Naive thymus-derived CD8-positive, alpha-beta T cell (primary cell): ENCODE measurements at regions of chr17 and their contacts with region 1.

Region 1: GRCh38 chr17:28335201-28335955 is at the starts of genes IFT20 and TNFAIP1:
- DNase-seq: peak; percentile 89 to 99 (median 98)
- ATAC-seq: peak; percentile 94
- H3K4me3 Mint-ChIP-seq: peak within 1 kb of the TSS; percentile 93 to 99 (median 98)
- H3K27ac Mint-ChIP-seq: peak within 1 kb of the TSS; percentile 83 to 99 (median 97)
- H3K4me1 Mint-ChIP-seq: peaks cover 29 to 64% (median 56%) of the 10 kb centered on the region in 4 donors
- H3K27me3 Mint-ChIP-seq: no peaks in the 10 kb centered on the region
- polyA plus RNA-seq, gene IFT20: 44.1 to 56.6 (median 54.0) TPM
- polyA plus RNA-seq, gene TNFAIP1: 5.6 to 9.4 (median 7.1) TPM

Region 2: DNA sequence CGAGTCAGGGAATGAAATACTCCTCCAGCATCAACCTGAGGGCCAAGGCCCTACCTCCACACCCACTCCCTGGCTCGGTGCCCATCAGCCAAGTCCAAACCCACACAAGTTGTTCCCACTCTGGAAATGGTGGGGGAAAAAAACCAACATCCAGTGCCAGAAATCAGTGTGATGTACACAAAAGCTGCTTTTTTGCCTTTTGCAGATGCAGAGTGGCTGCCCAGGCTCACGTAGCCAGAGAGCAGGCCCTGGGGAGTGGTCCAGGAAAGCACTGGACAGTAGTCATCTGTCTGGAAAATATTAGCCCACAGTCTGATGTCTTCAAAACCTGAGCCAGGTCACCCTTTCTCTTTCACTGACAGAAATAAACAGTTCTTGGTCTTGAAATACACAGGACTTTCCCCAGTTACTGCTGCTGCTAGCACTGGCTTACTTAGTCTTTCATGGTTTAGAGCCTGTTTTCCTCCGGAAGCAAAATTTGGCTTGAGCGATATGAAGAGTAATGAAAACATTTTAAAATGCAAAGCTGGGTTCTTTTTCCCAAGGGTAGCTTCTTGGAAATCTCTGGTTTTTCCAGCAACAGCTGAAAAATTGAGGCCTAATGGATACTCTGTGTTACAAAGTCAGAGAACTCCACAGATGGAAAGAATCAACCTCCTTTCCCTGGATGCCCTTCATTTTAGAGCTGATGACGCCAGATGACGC is 516.8 kb before region 1 on chr17:
- POLR2A ChIA-PET with region 1: interaction called, 10 read pairs
- DNase-seq: no peak
- ATAC-seq: no peak
- H3K4me3 Mint-ChIP-seq: no peak overlapping the region
- H3K27ac Mint-ChIP-seq: no peak overlapping the region
- H3K4me1 Mint-ChIP-seq: no peaks in the 10 kb centered on the region
- H3K27me3 Mint-ChIP-seq: no peaks in the 10 kb centered on the region

Region 3: DNA sequence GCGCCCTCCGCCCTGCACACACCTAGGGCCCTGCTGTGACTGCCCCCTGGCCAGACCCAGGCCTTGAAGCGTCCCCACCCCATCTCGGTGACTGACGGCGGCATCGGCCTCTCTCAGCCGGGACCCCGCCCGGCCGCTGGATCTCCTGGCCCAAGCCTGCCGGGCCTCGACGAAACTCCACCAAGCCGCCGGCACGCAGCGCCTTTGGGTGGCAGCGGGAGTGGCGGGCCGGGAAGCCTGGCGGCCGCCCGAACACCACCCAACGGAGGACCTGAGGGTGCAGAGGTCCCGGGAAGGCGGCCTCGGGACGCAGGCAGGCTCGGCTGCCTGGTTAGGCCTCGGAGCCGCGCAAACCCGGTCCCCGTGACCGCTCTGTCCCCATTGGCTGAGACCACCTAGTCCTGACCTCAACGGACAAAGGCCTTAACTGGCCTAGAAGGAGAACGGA is 28.4 kb before region 1 on chr17:
- POLR2A ChIA-PET with region 1: no interaction called
- DNase-seq: no peak
- ATAC-seq: no peak
- H3K4me3 Mint-ChIP-seq: no peak overlapping the region
- H3K27ac Mint-ChIP-seq: no peak overlapping the region
- H3K4me1 Mint-ChIP-seq: no peaks in the 10 kb centered on the region
- H3K27me3 Mint-ChIP-seq: peaks cover 6 to 30% (median 16%) of the 10 kb centered on the region in 5 donors

Region 4: GRCh38 chr17:28318759-28319660 is 16.4 kb before region 1 on chr17 and contains the start of gene TMEM97:
- POLR2A ChIA-PET with region 1: interaction called, 26 read pairs
- DNase-seq: peak; percentile 87 to 97 (median 92)
- ATAC-seq: peak; percentile 98
- H3K4me3 Mint-ChIP-seq: peak within 1 kb of the TSS; percentile 87 to 95 (median 90)
- H3K27ac Mint-ChIP-seq: peak within 1 kb of the TSS; percentile 31 to 92 (median 88)
- H3K4me1 Mint-ChIP-seq: peaks cover 15 to 32% (median 23%) of the 10 kb centered on the region in 4 donors
- H3K27me3 Mint-ChIP-seq: peaks cover 0 to 1% (median 0%) of the 10 kb centered on the region in 5 donors
- polyA plus RNA-seq, gene TMEM97: 7.1 to 10.1 (median 9.3) TPM

Region 5: DNA sequence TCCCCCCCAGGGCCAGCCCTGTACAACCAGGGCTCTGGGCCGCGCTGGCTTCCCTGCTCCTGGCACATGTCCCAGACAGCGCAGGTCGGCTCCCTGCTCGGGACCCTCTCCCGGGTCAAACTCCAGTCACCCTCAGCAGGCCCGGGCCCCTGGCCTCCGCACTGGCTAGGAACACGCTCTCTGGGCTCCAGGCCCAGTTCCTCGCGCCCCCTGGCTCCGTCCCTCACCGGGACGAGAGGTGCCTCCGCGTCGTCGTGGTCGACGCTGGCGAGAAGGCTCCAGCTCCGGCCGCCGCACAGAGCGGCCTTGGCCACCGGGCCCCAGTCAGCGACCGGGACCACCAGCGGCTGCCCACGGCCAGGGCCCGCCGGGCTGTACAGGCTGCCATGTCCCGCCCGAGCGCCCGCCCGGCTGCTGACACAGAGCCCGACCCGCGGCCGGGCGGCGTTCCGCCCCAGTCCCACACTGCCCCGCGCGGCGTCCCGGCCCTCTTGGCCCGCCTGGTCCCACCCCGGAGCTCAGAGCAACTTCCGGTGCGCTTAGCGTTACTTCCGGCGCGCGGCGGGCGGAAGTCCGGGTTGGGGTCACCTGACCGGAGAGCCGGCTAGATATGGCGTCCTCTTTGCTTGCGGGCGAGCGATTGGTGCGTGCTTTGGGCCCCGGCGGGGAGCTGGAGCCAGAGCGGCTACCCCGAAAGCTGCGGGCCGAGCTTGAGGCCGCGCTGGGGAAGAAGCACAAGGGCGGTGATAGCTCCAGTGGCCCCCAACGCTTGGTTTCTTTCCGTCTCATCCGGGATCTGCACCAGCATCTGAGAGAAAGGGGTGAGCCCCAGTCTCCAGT is 21.9 kb after region 1 on chr17 and contains the start of gene POLDIP2:
- POLR2A ChIA-PET with region 1: interaction called, 99 read pairs
- DNase-seq: peak; percentile 92 to 97 (median 96)
- ATAC-seq: peak; percentile 97 to 98
- H3K4me3 Mint-ChIP-seq: peak within 1 kb of the TSS; percentile 89 to 96 (median 93)
- H3K27ac Mint-ChIP-seq: peak within 1 kb of the TSS; percentile 91 to 97 (median 96)
- H3K4me1 Mint-ChIP-seq: peaks cover 19 to 33% (median 26%) of the 10 kb centered on the region in 4 donors
- H3K27me3 Mint-ChIP-seq: no peaks in the 10 kb centered on the region
- polyA plus RNA-seq, gene POLDIP2: 81.3 to 90.3 (median 85.6) TPM

Region 6: DNA sequence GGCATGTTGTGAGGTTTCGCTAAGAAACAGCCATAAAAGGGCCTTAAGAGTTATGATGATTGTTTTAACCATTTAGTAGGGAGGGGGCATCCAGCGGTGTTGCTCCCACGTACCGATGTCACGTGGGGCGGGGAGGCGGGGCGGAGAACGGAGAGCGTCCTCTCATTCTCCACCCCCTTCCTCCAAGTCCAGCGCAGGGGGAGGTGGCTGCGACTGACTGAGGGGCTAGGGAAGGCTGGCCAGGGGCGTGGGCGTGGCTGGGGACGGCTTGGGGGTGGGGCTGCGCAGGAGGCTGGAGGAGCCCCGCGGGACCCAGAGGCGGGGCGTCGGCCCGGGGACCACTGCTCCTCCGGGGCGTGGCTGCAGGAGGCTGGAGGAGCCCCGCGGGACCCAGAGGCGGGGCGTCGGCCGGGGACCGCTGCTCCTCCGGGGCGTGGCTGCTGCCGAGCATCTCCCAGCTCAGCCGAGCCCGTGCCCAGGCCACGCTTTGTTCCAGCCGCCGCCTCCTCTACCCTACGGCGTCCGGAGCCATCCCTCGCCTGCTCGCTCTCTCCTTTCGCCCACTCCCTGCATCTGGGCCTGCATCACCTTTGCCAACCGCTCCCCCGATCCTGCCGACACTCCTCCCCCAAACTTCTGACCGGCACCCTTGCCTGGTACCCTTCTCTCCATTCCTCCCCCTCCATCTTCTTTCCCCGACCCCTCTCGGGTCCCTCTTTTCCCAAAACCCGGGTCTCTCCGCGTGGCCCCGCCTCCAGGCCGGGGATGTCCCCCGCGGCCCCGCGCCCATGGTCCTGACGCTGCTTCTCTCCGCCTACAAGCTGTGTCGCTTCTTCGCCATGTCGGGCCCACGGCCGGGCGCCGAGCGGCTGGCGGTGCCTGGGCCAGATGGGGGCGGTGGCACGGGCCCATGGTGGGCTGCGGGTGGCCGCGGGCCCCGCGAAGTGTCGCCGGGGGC is 36.1 kb after region 1 on chr17 and contains the start of gene SARM1:
- POLR2A ChIA-PET with region 1: interaction called, 12 read pairs
- DNase-seq: peak; percentile 64 to 89 (median 76)
- ATAC-seq: peak; percentile 84 to 85
- H3K4me3 Mint-ChIP-seq: peak within 1 kb of the TSS; percentile 86 to 99 (median 96)
- H3K27ac Mint-ChIP-seq: peak within 1 kb of the TSS; percentile 87 to 98 (median 96)
- H3K4me1 Mint-ChIP-seq: peaks cover 12 to 25% (median 23%) of the 10 kb centered on the region in 4 donors
- H3K27me3 Mint-ChIP-seq: no peaks in the 10 kb centered on the region
- polyA plus RNA-seq, gene SARM1: 5.3 to 8.4 (median 7.0) TPM

Region 7: DNA sequence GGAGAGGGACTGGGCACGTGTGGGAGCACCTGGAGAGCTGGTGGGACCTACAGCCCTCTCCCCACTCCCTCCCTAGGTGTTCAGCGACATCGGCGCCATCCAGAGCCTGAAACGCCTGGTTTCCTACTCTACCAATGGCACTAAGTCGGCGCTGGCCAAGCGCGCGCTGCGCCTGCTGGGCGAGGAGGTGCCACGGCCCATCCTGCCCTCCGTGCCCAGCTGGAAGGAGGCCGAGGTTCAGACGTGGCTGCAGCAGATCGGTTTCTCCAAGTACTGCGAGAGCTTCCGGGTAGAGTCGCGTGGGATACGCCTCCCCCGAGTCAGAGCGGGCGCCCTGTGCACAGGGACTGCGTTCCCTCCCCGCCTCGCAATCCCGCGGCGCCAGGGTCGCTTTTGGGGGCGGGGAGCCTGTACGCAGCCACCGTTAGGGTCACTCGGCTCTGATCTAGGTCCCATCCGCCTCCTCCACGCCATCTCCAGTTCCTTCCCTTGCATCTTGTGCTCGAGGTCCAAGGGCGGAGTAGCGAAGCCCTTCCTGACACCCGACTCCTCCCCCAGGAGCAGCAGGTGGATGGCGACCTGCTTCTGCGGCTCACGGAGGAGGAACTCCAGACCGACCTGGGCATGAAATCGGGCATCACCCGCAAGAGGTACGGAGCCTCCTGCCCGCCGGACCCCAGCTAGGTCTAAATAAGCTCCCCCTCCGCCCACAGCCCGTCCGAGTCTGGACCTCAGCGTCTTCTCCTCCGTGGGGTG is 49.1 kb after region 1 on chr17:
- POLR2A ChIA-PET with region 1: interaction called, 12 read pairs
- DNase-seq: peak; percentile 40 to 75 (median 48)
- ATAC-seq: peak; percentile 90 to 94
- H3K4me3 Mint-ChIP-seq: peak overlapping the region; percentile 89 to 98 (median 94)
- H3K27ac Mint-ChIP-seq: peak overlapping the region; percentile 8 to 91 (median 86)
- H3K4me1 Mint-ChIP-seq: peaks cover 19 to 51% (median 36%) of the 10 kb centered on the region in 4 donors
- H3K27me3 Mint-ChIP-seq: peaks cover 0 to 10% (median 0%) of the 10 kb centered on the region in 5 donors

Region 8: DNA sequence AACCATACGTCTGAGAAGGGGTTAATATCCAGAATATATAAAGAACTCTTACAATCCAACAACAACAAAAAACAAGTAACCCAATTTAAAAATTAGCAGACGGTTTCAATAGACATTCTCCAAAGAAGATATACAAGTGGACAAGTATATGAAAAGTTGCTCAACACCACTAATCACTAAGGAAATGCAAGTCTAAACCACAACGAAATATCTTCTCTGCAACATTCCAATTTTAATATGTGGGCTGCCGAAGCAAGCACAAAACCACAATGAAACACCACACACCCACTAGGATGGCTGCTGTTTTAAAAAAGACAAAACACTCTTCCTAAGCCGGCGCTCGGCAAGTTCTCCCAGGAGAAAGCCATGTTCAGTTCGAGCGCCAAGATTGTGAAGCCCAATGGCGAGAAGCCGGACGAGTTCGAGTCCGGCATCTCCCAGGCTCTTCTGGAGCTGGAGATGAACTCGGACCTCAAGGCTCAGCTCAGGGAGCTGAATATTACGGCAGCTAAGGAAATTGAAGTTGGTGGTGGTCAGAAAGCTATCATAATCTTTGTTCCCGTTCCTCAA is 132.2 kb after region 1 on chr17:
- POLR2A ChIA-PET with region 1: no interaction called
- DNase-seq: no peak
- ATAC-seq: no peak
- H3K4me3 Mint-ChIP-seq: no peak overlapping the region
- H3K27ac Mint-ChIP-seq: no peak overlapping the region
- H3K4me1 Mint-ChIP-seq: no peaks in the 10 kb centered on the region
- H3K27me3 Mint-ChIP-seq: peaks cover 6 to 31% (median 26%) of the 10 kb centered on the region in 5 donors